OCI-LY7 (cell line): ENCODE measurements at regions of chr11 and their contacts with region 1.

Region 1: DNA sequence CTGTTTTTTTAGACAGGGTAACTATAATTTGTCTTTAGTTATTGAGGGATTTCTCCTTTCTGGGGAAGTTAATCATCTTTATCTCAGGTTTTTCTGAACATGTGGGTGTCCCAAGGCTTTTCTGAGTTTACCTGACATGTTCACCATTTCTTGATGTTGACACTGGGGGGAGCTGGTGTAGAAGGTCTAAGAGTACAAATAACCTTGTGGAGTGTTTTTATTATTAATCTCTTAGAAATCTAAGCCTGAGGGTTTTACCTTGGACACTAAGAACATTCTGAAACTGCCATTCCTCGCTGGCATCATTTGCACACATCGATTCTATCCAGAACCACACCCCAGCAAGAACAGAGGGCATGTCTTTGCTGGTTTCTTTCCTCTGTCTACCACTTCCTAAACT is 15.6 kb upstream of the C11orf91 start:
- DNase-seq: peak; percentile 36
- H3K4me3 ChIP-seq: no peak overlapping the region
- H3K27ac ChIP-seq: no peak overlapping the region
- H3K4me1 ChIP-seq: no peaks in the 10 kb centered on the region
- CTCF ChIP-seq: peak; percentile 74

Region 2: DNA sequence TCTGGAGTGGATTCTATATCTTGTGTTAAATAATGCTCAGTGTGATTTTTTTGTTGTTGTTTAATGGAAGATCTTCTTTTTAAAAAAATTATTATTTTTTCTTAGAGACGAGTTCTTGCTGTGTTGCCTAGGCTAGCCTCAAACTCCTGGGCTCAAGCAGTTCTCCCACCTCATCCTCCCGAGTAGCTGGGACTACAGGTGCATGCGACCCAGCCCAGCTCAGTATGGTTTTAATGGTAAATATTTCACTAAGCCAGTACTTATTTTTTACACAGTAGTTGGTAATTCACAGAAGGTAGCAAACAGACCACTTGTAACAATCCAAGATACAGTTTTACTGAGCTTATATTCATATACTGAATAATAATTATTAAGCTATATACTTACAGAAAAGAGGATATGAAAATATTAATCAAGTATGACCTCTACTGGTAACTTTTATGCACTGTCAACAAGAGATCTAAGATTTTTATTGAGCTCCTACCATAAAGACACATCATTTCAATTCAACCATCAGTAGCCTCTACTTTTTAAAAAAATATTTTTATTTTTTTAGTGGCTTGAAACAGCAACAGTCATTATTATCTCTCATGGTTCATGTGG is 26.1 kb after region 1 on chr11:
- CTCF ChIA-PET with region 1: interaction called, 20 read pairs
- POLR2A ChIA-PET with region 1: interaction called, 3 read pairs
- intact Hi-C with region 1: no loop called
- DNase-seq: peak; percentile 36
- H3K4me3 ChIP-seq: no peak overlapping the region
- H3K27ac ChIP-seq: no peak overlapping the region
- H3K4me1 ChIP-seq: no peaks in the 10 kb centered on the region
- CTCF ChIP-seq: peak; percentile 88

Region 3: DNA sequence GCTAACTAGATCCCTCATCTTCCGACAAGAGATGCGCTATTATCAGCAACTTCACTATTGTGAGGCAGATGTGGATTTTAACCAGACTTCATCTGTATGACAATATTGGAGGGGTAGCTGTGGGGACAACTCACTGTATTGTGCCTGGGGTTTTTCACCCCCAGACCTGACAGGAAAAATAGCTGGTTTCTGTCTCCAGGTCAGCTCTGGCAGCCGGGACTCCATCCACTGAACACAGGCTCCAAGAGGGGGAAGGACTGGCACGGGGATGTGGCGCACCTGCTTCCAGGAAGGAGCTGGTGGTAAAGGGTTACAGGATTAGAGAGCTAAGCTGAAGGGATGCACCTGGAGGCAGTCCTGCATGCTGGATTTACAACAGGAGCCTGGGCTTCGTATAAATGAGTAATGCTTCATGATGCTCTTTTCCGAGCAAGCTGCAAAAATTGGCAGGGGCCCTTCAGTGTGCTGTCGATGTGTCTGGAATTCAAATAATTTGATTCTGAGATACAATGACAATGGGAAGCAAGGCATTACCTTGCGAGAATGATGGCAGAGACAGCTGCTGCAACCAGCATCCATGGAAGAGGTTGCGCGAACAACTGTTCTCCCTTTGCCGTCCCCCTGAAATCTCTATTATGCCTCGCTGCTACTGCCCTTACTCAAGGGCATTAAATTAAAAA is 126.1 kb after region 1 on chr11:
- CTCF ChIA-PET with region 1: no interaction called
- POLR2A ChIA-PET with region 1: no interaction called
- intact Hi-C with region 1: no loop called
- DNase-seq: no peak
- H3K4me3 ChIP-seq: no peak overlapping the region
- H3K27ac ChIP-seq: no peak overlapping the region
- H3K4me1 ChIP-seq: no peaks in the 10 kb centered on the region
- CTCF ChIP-seq: no peak